PC-3 (cell line): ENCODE measurements at regions of chr13 and their contacts with region 1.

Region 1: GRCh38 chr13:27171827-27172494 is 350 bp upstream of the USP12 start:
- DNase-seq: peak; percentile 86
- ATAC-seq: peak; percentile 88
- H3K4me3 ChIP-seq: peak overlapping the region; percentile 87
- H3K27ac ChIP-seq: peak overlapping the region; percentile 68
- H3K4me1 ChIP-seq: peaks cover 34% of the 10 kb centered on the region
- H3K27me3 ChIP-seq: no peaks in the 10 kb centered on the region
- CTCF ChIP-seq: no peak

Region 2: GRCh38 chr13:27043013-27043412 is 128.9 kb before region 1 on chr13:
- CTCF ChIA-PET with region 1: no interaction called
- POLR2A ChIA-PET with region 1: no interaction called
- intact Hi-C with region 1: loop called (anchors 5 kb)
- DNase-seq: peak; percentile 93
- ATAC-seq: peak; percentile 83
- H3K4me3 ChIP-seq: no peak overlapping the region
- H3K27ac ChIP-seq: peak overlapping the region; percentile 83
- H3K4me1 ChIP-seq: peaks cover 47% of the 10 kb centered on the region
- H3K27me3 ChIP-seq: no peaks in the 10 kb centered on the region
- CTCF ChIP-seq: no peak

Region 3: DNA sequence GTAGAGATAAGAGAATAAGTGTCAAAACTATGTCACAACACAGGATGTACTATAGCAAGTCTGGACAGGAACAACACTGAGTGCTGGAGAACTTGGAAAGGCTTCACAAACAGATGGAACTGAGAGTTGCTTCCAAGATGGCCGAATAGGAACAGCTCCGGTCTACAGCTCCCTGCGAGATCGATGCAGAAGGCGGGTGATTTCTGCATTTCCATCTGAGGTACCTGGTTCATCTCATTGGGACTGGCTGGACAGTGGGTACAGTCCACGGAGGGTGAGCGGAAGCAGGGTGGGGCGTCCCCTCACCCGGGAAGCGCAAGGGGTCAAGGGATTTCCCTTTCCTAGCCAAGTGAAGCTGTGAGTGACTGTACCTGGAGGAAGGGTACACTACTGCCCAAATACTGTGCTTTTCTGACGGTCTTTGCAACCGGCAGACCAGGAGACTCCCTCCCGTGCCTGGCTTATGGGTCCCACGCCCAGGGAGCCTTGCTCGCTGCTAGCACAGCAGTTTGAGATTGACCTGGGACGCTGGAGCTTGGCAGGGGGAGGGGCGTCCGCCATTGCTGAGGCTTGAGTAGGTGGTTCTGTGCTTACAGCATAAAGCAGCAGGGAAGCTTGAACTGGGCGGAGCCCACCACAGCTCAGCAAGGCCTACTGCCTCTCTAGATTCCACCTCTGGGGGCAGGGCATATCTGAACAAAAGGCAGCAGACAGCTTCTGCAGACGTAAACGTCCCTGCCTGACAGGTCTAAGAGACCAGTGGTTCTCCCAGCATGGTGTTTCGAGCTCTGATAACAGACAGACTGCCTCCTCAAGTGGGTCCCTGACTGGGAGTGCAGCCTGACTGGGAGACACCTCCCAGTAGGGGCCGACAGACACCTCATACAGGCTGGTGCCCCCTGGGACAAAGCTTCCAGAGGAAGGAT is 46.3 kb before region 1 on chr13:
- CTCF ChIA-PET with region 1: no interaction called
- POLR2A ChIA-PET with region 1: no interaction called
- intact Hi-C with region 1: loop called (anchors 5 kb)
- DNase-seq: no peak
- ATAC-seq: no peak
- H3K4me3 ChIP-seq: no peak overlapping the region
- H3K27ac ChIP-seq: no peak overlapping the region
- H3K4me1 ChIP-seq: peaks cover 27% of the 10 kb centered on the region
- H3K27me3 ChIP-seq: no peaks in the 10 kb centered on the region
- CTCF ChIP-seq: no peak

Region 4: GRCh38 chr13:27203854-27204253 is 31.9 kb after region 1 on chr13:
- CTCF ChIA-PET with region 1: no interaction called
- POLR2A ChIA-PET with region 1: interaction called, 3 read pairs
- intact Hi-C with region 1: loop called (anchors 5 kb)
- DNase-seq: peak; percentile 29
- ATAC-seq: peak; percentile 63
- H3K4me3 ChIP-seq: no peak overlapping the region
- H3K27ac ChIP-seq: no peak overlapping the region
- H3K4me1 ChIP-seq: peaks cover 22% of the 10 kb centered on the region
- H3K27me3 ChIP-seq: no peaks in the 10 kb centered on the region
- CTCF ChIP-seq: peak; percentile 47

Region 5: DNA sequence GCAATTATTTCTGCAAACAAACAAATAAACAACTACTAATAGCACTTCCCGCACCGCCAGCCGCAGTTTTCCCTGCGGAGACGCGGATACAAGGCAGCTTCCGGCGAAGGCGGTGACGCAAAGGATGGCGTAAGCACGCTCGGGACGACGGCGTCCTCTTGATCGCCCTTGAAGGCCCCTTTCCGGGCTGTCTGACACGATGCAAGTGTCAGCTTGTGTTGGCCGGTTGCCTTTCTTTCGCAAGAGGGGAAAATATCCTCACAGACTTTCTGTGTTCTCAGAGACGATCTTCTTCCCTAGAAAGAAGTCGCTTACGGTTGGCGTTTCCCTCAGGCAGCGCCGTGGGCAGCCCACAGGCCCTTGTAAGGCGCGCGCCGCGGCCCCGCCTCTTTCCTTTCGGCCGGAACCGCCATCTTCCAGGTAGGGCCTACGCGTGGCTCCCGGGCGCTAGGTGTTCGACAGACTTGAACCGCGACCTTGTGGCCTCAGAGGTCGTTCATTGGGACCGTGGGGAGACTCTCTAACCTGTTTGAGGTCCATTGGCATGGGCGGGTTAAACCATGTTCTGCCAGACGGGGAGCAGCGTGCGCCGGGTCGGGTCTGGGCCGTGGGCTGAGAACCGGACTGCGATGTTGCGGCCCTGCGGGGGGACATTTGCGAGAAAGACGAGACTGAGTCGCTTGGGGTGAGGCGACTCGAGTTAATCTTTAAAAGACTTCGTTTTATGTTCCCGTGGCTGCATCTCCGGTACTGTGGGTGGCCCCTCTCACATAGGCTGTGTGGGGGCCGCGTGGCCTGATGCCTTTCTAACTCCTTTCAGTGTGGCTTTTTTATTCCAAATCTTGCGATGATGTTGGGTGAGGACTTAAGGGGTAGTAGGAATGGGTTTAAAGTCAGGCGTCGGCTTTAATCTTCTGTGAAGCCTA is 79.5 kb after region 1 on chr13 and contains the start of gene RPL21:
- CTCF ChIA-PET with region 1: no interaction called
- POLR2A ChIA-PET with region 1: no interaction called
- intact Hi-C with region 1: loop called (anchors 1 kb)
- DNase-seq: peak; percentile 90
- ATAC-seq: peak; percentile 97
- H3K4me3 ChIP-seq: peak within 1 kb of the TSS; percentile 90
- H3K27ac ChIP-seq: peak within 1 kb of the TSS; percentile 89
- H3K4me1 ChIP-seq: peaks cover 20% of the 10 kb centered on the region
- H3K27me3 ChIP-seq: no peaks in the 10 kb centered on the region
- CTCF ChIP-seq: no peak
- total RNA-seq, gene RPL21: 380 and 552 TPM in 2 replicates

Region 6: DNA sequence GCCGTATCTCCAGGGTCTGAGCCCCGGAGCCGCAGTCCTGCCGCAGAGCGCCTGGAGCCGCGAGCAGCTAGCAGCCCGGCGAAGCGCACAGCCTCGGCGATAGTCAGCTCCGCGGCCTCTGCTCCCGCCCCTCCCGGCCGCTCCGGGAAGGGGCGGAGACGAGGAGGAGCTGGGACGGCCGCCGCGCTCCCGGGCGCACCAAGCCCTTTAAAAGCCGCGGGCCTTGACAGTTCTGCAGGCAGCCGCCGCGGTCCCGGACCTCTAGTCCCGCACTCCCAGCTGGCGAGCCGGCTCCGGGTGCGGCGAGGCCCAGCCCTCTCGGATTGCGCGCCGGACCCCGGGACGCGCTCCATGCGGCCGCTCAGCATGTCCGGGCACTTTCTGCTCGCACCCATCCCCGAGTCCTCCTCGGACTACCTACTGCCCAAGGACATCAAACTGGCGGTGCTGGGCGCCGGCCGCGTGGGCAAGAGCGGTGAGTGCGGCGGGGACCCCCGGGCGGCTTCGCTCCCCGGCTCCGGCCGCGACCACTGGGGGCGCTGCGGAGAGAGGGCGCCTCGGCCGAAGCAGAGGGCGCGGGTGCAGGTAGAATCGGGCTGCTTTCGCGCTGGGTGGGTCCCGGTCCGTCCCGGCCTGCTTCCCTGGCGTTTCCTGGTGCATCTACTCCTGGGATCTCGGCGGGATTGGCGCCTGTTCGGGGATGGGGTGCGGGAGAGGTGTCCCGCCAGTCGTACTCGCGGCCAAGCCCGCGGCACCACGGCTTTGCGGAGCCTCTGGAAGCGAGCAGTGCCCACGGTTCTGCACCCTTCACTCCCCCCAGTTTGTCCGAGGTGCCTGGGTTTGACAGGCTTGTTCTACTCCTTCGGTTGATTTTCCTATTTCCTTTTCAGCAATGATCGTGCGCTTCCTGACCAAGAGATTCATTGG is 98.9 kb after region 1 on chr13 and contains the start of gene RASL11A:
- CTCF ChIA-PET with region 1: no interaction called
- POLR2A ChIA-PET with region 1: interaction called, 3 read pairs
- intact Hi-C with region 1: loop called (anchors 2 kb)
- DNase-seq: peak; percentile 87
- ATAC-seq: peak; percentile 87
- H3K4me3 ChIP-seq: peak within 1 kb of the TSS; percentile 99
- H3K27ac ChIP-seq: peak within 1 kb of the TSS; percentile 26
- H3K4me1 ChIP-seq: peaks cover 18% of the 10 kb centered on the region
- H3K27me3 ChIP-seq: no peaks in the 10 kb centered on the region
- CTCF ChIP-seq: peak; percentile 82
- total RNA-seq, gene RASL11A: 43.3 and 59.7 TPM in 2 replicates